ENCODE measurements at regions of chr6 and their contacts with region 1.

Region 1: GRCh38 chr6:82017288-82017687 is 230.3 kb downstream of the IBTK start:
- DNase-seq: peak in 2 of 5 donors; percentile 39 to 51
- ATAC-seq: peak; percentile 68 to 90 (median 82)
- H3K4me3 ChIP-seq: no peak overlapping the region
- H3K27ac ChIP-seq: peak overlapping the region; percentile 34 to 80 (median 54)
- H3K4me1 ChIP-seq: peaks cover 0 to 56% (median 19%) of the 10 kb centered on the region in 12 donors
- H3K27me3 ChIP-seq: no peaks in the 10 kb centered on the region
- CTCF ChIP-seq: no peak
- POLR2A ChIP-seq: no peak

Region 2: GRCh38 chr6:81614292-81614691 is 403.0 kb before region 1 on chr6:
- intact Hi-C with region 1: loop called in 1 of 10 experiments (anchors 10 kb)
- DNase-seq: no peak
- ATAC-seq: peak in 2 of 4 donors; percentile 77 to 89
- H3K4me3 ChIP-seq: no peak overlapping the region
- H3K27ac ChIP-seq: peak overlapping the region in 7 of 12 donors; percentile 1 to 61 (median 50)
- H3K4me1 ChIP-seq: peaks cover 0 to 19% (median 4%) of the 10 kb centered on the region in 12 donors
- H3K27me3 ChIP-seq: no peaks in the 10 kb centered on the region
- CTCF ChIP-seq: no peak
- POLR2A ChIP-seq: no peak